Naive thymus-derived CD4-positive, alpha-beta T cell (primary cell): ENCODE measurements at regions of chr14 and their contacts with region 1.

Region 1: GRCh38 chr14:100213956-100214774 is 24.8 kb upstream of the YY1 start:
- DNase-seq: peak; percentile 82 to 95 (median 90)
- ATAC-seq: peak; percentile 98
- H3K4me3 ChIP-seq: peak overlapping the region; percentile 90
- H3K4me3 Mint-ChIP-seq: peak overlapping the region; percentile 76 to 89 (median 85)
- H3K27ac ChIP-seq: peak overlapping the region; percentile 97
- H3K27ac Mint-ChIP-seq: peak overlapping the region; percentile 62 to 94 (median 92)
- H3K4me1 ChIP-seq: peaks cover 12 to 19% of the 10 kb centered on the region in 2 donors
- H3K4me1 Mint-ChIP-seq: peaks cover 10 to 39% (median 34%) of the 10 kb centered on the region in 7 donors
- H3K27me3 ChIP-seq: no peaks in the 10 kb centered on the region
- H3K27me3 Mint-ChIP-seq: no peaks in the 10 kb centered on the region

Region 2: GRCh38 chr14:99971087-99971940 is 242.9 kb before region 1 on chr14:
- CTCF ChIA-PET with region 1: no interaction called
- POLR2A ChIA-PET with region 1: no interaction called
- intact Hi-C with region 1: loop called in 1 of 2 experiments (anchors 5 kb)
- DNase-seq: peak; percentile 69 to 87 (median 81)
- ATAC-seq: peak; percentile 95
- H3K4me3 ChIP-seq: peak overlapping the region; percentile 53
- H3K4me3 Mint-ChIP-seq: peak overlapping the region; percentile 43 to 93 (median 76)
- H3K27ac ChIP-seq: peak overlapping the region; percentile 58
- H3K27ac Mint-ChIP-seq: peak overlapping the region in 4 of 9 donors; percentile 21 to 87 (median 48)
- H3K4me1 ChIP-seq: no peaks in the 10 kb centered on the region
- H3K4me1 Mint-ChIP-seq: peaks cover 7 to 21% (median 15%) of the 10 kb centered on the region in 7 donors
- H3K27me3 ChIP-seq: no peaks in the 10 kb centered on the region
- H3K27me3 Mint-ChIP-seq: peaks cover 0 to 33% (median 7%) of the 10 kb centered on the region in 5 donors

Region 3: GRCh38 chr14:100111931-100112704 is 102.0 kb before region 1 on chr14:
- CTCF ChIA-PET with region 1: no interaction called
- POLR2A ChIA-PET with region 1: no interaction called
- intact Hi-C with region 1: no loop called
- DNase-seq: no peak
- ATAC-seq: no peak
- H3K4me3 ChIP-seq: no peak overlapping the region
- H3K4me3 Mint-ChIP-seq: peak overlapping the region in 1 of 10 donors; percentile 43
- H3K27ac ChIP-seq: peak overlapping the region; percentile 56
- H3K27ac Mint-ChIP-seq: peak overlapping the region; percentile 31 to 92 (median 84)
- H3K4me1 ChIP-seq: peaks cover 12 to 38% of the 10 kb centered on the region in 2 donors
- H3K4me1 Mint-ChIP-seq: peaks cover 48 to 74% (median 57%) of the 10 kb centered on the region in 7 donors
- H3K27me3 ChIP-seq: no peaks in the 10 kb centered on the region
- H3K27me3 Mint-ChIP-seq: no peaks in the 10 kb centered on the region

Region 4: GRCh38 chr14:100234511-100234910 is 20.3 kb after region 1 on chr14:
- CTCF ChIA-PET with region 1: interaction called, 4 read pairs
- POLR2A ChIA-PET with region 1: interaction called, 232 read pairs
- intact Hi-C with region 1: loop called (anchors 1 kb)
- DNase-seq: peak in 7 of 9 donors; percentile 29 to 69 (median 54)
- ATAC-seq: no peak
- H3K4me3 ChIP-seq: no peak overlapping the region
- H3K4me3 Mint-ChIP-seq: peak overlapping the region; percentile 13 to 98 (median 44)
- H3K27ac ChIP-seq: peak overlapping the region; percentile 59
- H3K27ac Mint-ChIP-seq: peak overlapping the region; percentile 44 to 99 (median 87)
- H3K4me1 ChIP-seq: peaks cover 18 to 25% of the 10 kb centered on the region in 2 donors
- H3K4me1 Mint-ChIP-seq: peaks cover 38 to 71% (median 62%) of the 10 kb centered on the region in 7 donors
- H3K27me3 ChIP-seq: no peaks in the 10 kb centered on the region
- H3K27me3 Mint-ChIP-seq: peaks cover 0 to 2% (median 0%) of the 10 kb centered on the region in 5 donors